Calu3 (cell line): ENCODE measurements at regions of chr2 and their contacts with region 1.

Region 1: DNA sequence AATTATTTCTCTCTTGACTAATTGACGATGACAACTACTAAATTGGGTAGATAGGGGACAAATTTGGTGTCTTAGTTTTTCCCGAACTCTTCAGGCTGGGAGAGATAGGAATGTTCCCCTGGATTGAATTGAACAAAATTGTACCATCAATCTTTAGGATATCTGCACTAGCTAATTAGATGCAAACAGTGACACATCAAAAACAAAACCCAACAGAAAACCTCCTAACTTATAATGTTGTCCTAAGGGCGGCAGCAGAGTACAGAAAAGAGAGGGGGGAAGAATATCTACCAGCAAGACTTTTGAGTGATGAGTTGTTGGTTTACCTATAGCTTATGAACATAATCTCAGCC is 342.9 kb downstream of the INSIG2 start:
- DNase-seq: peak; percentile 38
- H3K4me3 Mint-ChIP-seq: peak overlapping the region; percentile 3
- H3K27ac Mint-ChIP-seq: peak overlapping the region; percentile 74
- H3K4me1 Mint-ChIP-seq: peaks cover 51% of the 10 kb centered on the region
- H3K27me3 Mint-ChIP-seq: no peaks in the 10 kb centered on the region
- CTCF ChIP-seq: no peak

Region 2: DNA sequence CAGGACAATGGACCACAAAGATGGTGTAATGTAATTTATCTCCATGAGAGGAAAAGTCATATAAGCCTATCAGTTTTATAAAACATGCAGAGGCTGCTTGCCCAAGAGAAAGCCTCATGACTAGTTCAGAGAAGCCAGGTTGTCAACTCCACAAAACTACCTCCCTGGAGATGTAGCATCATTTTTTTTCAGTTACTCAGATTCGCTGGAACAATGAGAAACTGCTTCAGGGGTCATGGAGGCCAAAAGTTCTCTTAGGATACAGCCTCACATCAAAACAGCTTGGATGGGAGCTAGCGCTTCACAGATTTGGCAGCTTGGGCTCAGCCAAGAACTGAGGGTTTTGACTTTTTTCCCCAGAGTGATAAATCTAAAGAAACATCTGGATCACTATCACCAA is 79.3 kb before region 1 on chr2:
- CTCF ChIA-PET with region 1: no interaction called
- intact Hi-C with region 1: no loop called
- DNase-seq: no peak
- H3K4me3 Mint-ChIP-seq: no peak overlapping the region
- H3K27ac Mint-ChIP-seq: no peak overlapping the region
- H3K4me1 Mint-ChIP-seq: no peaks in the 10 kb centered on the region
- H3K27me3 Mint-ChIP-seq: no peaks in the 10 kb centered on the region
- CTCF ChIP-seq: no peak

Region 3: GRCh38 chr2:118386641-118387302 is 44.4 kb before region 1 on chr2:
- CTCF ChIA-PET with region 1: interaction called, 11 read pairs
- intact Hi-C with region 1: loop called (anchors 5 kb)
- DNase-seq: no peak
- H3K4me3 Mint-ChIP-seq: no peak overlapping the region
- H3K27ac Mint-ChIP-seq: no peak overlapping the region
- H3K4me1 Mint-ChIP-seq: peaks cover 27% of the 10 kb centered on the region
- H3K27me3 Mint-ChIP-seq: no peaks in the 10 kb centered on the region
- CTCF ChIP-seq: no peak

Region 4: DNA sequence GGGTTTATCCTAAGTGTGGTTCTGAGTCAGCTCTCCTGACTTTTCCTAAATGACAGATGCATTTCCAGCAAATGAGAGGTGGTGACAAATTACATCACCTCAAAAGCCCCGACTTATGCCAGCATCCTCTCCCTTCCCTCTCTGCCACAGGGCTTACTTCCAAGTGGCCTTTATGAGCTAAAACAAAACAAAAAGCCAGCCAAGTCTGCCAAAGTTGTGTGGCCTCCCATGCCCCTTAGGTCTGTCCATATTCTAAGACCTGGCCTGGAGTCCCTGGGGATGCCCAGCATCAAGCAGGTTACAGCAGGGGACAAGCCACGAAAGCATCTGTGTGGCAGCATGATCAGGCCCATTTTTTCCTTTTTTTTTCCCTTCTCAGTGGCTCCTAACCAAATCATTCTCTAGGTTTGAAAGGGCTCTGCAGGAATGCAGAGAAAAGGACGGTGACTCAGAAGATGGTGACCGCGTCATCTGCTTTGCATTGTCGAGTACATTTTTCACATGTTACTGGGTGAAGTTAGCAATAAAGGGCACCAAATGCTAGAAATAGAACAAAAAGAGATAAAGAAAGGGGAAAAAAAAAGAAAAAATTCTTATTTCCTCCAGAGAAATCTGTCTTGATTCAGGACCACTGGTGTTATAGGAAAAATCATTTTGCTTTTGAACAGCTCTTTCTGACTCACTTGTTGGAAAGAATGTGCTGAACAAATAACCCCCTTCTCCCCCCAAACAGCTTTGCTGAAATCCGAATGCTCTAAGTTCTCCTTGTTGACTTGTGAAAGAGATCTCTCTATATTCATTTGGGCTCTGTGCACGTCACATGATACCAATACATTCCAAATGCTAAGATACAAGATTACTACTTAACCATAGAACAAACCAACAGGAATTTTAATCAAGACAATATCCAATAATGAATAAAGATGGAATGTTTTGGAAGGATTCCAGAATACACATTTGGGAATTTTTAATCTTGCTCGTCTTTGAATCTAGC is 237.6 kb after region 1 on chr2:
- CTCF ChIA-PET with region 1: no interaction called
- intact Hi-C with region 1: loop called (anchors 5 kb)
- DNase-seq: peak; percentile 25
- H3K4me3 Mint-ChIP-seq: peak overlapping the region; percentile 40
- H3K27ac Mint-ChIP-seq: peak overlapping the region; percentile 56
- H3K4me1 Mint-ChIP-seq: peaks cover 31% of the 10 kb centered on the region
- H3K27me3 Mint-ChIP-seq: no peaks in the 10 kb centered on the region
- CTCF ChIP-seq: no peak

Region 5: DNA sequence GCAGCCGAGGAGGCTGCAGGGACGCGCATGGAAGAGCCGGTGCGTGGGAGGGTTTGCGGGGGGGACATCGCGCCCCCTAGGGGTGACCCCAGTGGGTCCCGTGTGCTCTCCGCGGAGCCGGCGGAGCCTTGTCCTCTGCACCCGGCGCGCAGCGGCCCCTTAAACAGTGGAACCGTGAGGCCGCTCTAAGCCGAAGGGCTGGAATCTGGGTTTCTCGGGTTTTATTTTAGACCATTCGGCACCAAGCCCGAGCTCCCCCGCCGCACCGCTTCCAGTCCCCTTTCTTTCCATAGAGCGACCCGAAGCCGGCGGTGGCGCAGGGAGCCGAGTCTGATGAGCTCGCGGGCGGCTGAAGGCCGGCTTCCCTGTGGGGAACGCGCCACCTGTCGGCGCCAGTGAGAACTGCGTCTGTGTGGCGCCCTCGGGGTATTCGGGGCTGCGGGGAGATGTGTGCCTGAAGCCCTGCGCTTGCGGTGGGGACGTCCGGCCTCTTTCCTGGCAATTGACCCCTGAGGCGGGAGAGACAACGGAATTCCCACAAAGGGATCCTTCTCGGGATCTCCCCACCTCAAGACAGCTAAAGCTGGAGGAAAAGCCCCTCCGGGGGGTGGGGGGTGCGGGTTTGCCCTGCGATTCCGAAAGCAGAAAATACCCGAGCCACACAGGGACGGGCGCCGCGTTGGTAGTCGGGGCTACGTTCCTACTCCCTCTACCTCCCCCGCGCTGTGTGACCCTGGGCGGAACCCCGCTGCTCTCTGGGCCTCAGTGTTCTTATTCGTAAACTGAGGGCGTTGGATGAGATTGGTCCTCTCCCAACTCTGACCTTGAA is 424.5 kb after region 1 on chr2:
- CTCF ChIA-PET with region 1: interaction called, 18 read pairs
- intact Hi-C with region 1: loop called (anchors 2 kb)
- DNase-seq: peak; percentile 93
- H3K4me3 Mint-ChIP-seq: peak overlapping the region; percentile 72
- H3K27ac Mint-ChIP-seq: no peak overlapping the region
- H3K4me1 Mint-ChIP-seq: no peaks in the 10 kb centered on the region
- H3K27me3 Mint-ChIP-seq: peaks cover 12% of the 10 kb centered on the region
- CTCF ChIP-seq: peak; percentile 91